Posterior cingulate gyrus (tissue), 11 donors: ENCODE measurements at regions of chr13 and their contacts with region 1.

Region 1: DNA sequence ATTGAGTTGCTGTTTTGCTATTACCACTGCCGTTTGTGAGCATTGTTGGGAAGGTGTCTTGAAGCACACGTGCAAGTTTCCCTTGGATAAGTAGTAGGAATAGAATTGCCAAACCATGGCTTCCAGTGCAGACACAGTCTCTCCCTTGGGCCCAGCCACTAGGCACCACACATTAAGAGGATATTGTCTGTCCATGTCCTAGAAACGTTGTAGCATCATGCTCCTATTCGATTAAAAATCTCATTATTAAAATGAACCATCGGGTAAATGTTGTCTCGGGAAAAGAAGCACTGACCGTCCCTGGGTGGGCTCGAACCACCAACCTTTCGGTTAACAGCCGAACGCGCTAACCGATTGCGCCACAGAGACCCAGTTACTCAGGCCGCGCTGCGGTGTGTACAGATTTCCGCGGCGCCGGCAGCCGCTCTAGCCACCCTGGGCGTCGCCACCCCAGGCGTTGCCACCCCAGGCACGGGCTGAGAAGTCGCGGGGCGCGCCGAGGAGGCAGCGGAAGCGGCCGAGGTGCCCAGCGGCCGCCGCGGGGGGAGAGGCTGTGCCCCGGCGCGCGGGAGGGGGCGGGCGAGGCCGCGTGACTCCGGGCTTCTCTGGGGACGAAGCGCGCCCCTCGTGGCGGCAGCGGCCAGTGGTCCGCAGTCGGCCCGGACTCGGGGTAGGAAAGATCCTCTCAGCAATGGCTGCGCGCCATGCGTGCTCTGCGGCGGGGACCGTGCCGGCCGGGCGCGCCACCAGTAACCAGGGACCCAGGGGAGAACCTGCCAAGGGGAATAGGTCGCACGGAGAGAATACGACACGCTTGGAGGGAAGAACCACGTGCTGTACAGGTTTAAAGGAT is 56.2 kb downstream of the USPL1 start:
- DNase-seq: peak; percentile 77 to 98 (median 86)

Region 2: GRCh38 chr13:30408319-30409101 is 265.4 kb before region 1 on chr13:
- intact Hi-C with region 1: no loop called
- DNase-seq: peak; percentile 81 to 98 (median 92)

Region 3: GRCh38 chr13:30529085-30529834 is 144.6 kb before region 1 on chr13:
- intact Hi-C with region 1: no loop called
- DNase-seq: no peak

Region 4: DNA sequence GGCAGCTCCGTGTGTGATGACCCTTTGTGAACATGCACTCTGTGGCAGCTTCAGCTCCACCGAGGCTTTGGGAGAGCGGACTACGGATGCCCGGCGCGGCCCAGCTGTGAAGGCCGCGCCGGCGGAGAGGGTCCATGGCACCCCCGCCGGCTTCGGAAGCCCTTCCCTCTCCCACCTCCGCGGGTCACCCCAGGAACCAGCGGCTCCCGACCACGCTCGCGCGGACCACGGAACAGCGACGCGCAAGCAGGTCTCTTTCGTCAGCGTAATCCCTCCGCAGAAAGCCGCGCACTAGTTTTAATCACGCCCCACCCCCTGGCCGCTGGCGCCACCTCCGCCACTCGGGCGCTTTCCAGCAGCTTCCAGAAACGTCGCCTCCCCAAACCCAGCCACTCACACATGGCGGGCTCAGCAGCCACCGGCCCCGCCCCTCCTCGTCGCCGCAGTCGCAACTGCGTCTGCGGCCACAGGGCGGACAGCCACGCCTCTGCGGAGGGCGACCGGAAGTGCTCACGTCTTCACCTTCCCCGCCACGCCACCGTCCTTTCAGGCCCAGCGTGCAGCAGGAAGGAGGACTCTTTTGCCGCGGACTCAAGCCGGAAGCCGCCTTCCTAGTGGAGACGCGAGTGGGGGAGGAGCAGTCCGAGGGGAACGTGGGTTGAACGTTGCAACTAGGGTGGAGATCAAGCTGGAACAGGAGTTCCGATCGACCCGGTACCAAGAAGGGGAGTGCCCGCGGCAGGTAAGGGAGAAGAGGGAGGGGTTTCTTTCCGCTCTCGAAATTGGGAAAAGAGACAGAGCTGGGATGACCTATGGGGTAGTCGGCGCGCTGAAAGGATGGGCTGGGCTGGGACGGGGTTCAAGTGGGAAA is 56.3 kb before region 1 on chr13 and contains the start of gene USPL1:
- intact Hi-C with region 1: loop called (anchors 2 kb)
- DNase-seq: peak; percentile 94 to 99 (median 98)

Region 5: DNA sequence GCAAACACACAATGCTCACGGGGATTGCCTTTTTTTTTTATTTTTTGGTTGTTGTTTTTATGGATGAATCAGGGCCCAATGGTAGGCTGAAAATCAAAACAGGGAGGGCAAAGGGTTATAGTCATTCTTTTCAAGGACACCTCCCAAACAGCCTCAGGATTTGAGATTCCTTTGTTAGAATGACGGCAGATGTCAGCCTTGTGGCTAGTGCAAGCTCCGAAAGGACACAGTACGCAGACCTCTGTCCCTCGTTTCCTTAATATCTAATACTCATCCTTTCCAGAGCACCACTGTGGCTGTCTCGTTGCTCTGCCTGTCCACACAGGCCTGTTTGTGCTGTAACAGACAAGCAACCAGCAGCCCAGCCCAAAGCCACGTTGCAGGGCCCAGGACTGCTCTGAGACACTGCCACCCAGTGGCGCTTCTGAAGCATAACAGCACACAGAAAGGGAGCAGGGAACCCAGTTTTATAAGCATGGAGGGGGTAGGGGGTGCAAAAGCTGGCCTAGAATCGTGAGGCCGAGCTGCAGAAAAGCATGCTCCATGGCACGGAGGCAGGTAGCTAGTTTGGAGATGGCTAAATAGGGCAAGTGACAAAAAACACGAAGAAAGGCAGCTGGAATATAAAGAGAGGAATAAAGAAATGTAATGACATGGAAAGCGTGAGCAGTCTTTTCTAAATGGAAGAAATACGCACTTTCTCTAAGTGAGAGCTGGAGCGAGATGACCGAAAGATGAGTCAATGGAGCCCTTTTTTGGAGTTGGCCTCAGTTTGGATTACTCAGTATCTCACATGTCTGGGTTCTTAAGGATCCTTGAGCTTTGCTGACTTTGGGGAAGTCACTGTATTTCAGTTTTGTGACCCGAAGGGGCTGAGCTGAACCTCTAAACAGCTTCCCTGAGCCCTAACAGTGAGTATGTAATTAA is 191.5 kb after region 1 on chr13:
- intact Hi-C with region 1: loop called (anchors 10 kb)
- DNase-seq: peak; percentile 61 to 97 (median 80)